Heart right ventricle (tissue), 16 donors: ENCODE measurements at regions of chr2 and their contacts with region 1.

Region 1: GRCh38 chr2:3303583-3304406 is 73.8 kb downstream of the EIPR1 start:
- DNase-seq: peak; percentile 87 to 88
- ATAC-seq: peak; percentile 94 to 99 (median 97)
- H3K4me3 ChIP-seq: peak overlapping the region in 7 of 10 donors; percentile 18 to 40 (median 30)
- H3K27ac ChIP-seq: peak overlapping the region in 4 of 10 donors; percentile 34 to 68 (median 58)
- H3K4me1 ChIP-seq: peaks cover 0 to 11% (median 5%) of the 10 kb centered on the region in 9 donors
- H3K27me3 ChIP-seq: no peaks in the 10 kb centered on the region
- CTCF ChIP-seq: peak; percentile 91 to 99 (median 96)

Region 2: GRCh38 chr2:1854729-1855547 is 1448.9 kb before region 1 on chr2:
- intact Hi-C with region 1: loop called in 1 of 10 experiments (anchors 10 kb)
- DNase-seq: peak in 1 of 2 donors; percentile 22
- ATAC-seq: peak; percentile 78 to 87 (median 80)
- H3K4me3 ChIP-seq: peak overlapping the region in 2 of 10 donors; percentile 2 to 5
- H3K27ac ChIP-seq: no peak overlapping the region
- H3K4me1 ChIP-seq: peaks cover 0 to 11% (median 0%) of the 10 kb centered on the region in 9 donors
- H3K27me3 ChIP-seq: peaks cover 0 to 80% (median 56%) of the 10 kb centered on the region in 7 donors
- CTCF ChIP-seq: peak in 8 of 9 donors; percentile 30 to 71 (median 57)

Region 3: DNA sequence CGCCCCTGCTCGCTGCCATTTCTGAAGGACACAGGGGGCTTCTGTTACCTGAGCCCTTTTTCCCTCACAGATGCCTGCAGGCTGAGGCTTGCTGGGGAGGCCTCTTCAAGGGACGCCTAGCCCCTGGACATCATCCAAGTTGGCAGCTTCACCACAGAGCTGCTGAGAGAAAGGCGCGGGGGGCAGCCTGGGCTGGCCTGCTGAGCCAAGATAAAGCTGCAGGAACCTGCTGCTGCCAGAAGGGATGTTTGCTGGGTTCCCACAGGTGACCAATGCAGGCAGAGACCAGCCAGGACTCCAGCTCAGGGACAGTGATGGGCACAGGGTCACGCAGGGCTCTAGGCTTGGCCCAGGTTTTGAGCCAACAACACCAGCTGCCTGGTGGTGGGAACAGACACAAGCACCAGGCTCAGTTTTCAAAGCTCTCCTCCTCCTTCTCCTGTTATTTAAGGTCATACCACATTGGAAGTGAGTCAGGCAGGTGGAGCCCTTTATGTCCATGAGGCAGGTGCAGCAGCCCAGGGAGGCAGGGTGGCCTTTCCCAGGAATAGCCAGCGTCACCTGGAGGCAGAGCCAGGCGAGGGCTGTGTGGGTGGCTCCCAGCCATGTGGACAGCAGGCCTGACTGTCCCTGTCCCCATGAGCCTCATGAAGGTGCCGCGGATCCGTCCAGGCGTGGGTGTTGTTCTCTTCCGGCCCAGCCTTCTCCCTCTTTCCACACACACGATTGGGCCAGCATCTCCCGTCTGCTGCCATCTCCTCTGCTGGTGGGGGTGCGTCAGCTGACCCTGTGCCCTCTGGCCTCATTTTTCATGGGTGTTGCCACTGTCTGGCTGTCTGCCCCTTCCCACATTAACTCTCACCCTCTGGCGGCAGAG is 457.2 kb before region 1 on chr2:
- intact Hi-C with region 1: loop called in 2 of 10 experiments (anchors 10 kb)
- DNase-seq: peak; percentile 50 to 67
- ATAC-seq: peak; percentile 48 to 86 (median 75)
- H3K4me3 ChIP-seq: no peak overlapping the region
- H3K27ac ChIP-seq: peak overlapping the region in 4 of 10 donors; percentile 7 to 67 (median 42)
- H3K4me1 ChIP-seq: peaks cover 5 to 16% (median 10%) of the 10 kb centered on the region in 9 donors
- H3K27me3 ChIP-seq: no peaks in the 10 kb centered on the region
- CTCF ChIP-seq: peak in 1 of 9 donors; percentile 15

Region 4: GRCh38 chr2:3001615-3002560 is 301.9 kb before region 1 on chr2:
- intact Hi-C with region 1: loop called in 8 of 10 experiments (anchors 2 to 10 kb)
- DNase-seq: no peak
- ATAC-seq: peak in 4 of 8 donors; percentile 52 to 68 (median 66)
- H3K4me3 ChIP-seq: no peak overlapping the region
- H3K27ac ChIP-seq: no peak overlapping the region
- H3K4me1 ChIP-seq: no peaks in the 10 kb centered on the region
- H3K27me3 ChIP-seq: peaks cover 0 to 24% (median 13%) of the 10 kb centered on the region in 7 donors
- CTCF ChIP-seq: peak in 8 of 9 donors; percentile 9 to 58 (median 46)

Region 5: GRCh38 chr2:3264010-3264744 is 39.6 kb before region 1 on chr2:
- intact Hi-C with region 1: no loop called
- DNase-seq: no peak
- ATAC-seq: peak in 4 of 8 donors; percentile 41 to 61 (median 47)
- H3K4me3 ChIP-seq: no peak overlapping the region
- H3K27ac ChIP-seq: no peak overlapping the region
- H3K4me1 ChIP-seq: peaks cover 0 to 7% (median 0%) of the 10 kb centered on the region in 9 donors
- H3K27me3 ChIP-seq: no peaks in the 10 kb centered on the region
- CTCF ChIP-seq: no peak